Ascending aorta (tissue), 2 donors: ENCODE measurements at regions of chr10 and their contacts with region 1.

Region 1: DNA sequence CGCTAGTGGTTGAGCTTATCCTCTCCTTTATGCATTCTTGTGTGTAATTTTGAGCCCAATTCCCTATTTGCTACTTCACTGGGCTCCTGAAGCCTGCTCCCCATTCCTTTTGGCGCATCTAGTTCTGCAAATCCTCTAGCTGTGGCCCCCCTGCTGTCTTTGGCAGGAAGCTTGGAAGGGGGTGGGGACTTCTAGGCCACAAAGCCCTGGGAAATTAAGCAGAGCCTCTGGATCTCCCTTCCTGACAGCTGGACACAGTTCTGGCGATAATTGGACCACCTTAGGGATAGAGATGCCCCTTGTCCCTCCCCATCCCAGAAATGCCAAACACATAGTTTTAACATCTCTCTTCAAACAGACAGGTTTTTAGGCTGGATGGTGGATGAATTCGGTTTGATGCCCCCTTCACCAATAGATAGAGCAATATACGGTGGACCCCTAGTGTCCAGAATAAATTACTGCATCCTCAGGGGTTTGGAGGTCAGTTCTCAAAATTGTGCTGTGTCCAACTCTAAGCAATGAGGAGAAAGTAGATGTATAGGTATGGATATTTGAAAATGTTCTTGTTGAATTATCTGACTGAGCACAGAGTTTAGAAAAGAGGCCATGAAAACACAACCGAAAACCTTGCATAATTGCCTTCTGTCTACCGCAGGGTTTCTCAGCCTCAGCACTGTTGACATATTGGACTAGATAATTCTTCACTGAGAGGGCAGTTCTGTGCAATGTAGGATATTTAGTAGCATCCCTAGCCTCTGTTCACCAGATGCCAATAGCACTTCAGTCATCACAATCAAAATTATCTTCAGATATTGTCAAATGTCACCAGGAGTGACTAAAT is 75.5 kb downstream of the PAPSS2 start:
- DNase-seq: no peak
- H3K4me3 ChIP-seq: peak overlapping the region in 1 of 2 donors; percentile 23
- H3K27ac ChIP-seq: no peak overlapping the region
- H3K4me1 ChIP-seq: peaks cover 0 to 4% of the 10 kb centered on the region in 2 donors
- H3K27me3 ChIP-seq: no peaks in the 10 kb centered on the region
- CTCF ChIP-seq: peak; percentile 54 to 85 (median 82)

Region 2: DNA sequence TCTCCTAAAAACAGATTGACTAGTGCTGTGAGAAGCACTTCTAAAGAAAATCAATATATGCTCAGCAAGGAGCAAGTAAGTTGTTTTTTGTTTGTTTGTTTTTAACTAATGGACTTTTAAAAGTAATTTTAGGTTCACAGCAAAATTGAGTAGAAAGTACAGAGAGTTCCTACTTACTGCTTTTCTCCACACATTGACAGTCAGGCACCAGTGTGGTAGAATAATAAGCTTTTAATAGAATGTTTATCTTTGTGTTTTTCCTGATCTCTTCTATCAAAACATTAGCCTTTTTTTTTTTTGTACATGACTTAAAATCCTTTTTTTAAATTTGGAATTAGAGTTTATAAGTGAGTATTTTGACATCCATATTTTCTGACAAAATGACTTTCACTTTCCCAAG is 202.5 kb before region 1 on chr10:
- intact Hi-C with region 1: loop called (anchors 1 kb)
- DNase-seq: no peak
- H3K4me3 ChIP-seq: peak overlapping the region in 1 of 2 donors; percentile 7
- H3K27ac ChIP-seq: peak overlapping the region; percentile 59 to 61
- H3K4me1 ChIP-seq: peaks cover 0 to 6% of the 10 kb centered on the region in 2 donors
- H3K27me3 ChIP-seq: no peaks in the 10 kb centered on the region
- CTCF ChIP-seq: no peak

Region 3: DNA sequence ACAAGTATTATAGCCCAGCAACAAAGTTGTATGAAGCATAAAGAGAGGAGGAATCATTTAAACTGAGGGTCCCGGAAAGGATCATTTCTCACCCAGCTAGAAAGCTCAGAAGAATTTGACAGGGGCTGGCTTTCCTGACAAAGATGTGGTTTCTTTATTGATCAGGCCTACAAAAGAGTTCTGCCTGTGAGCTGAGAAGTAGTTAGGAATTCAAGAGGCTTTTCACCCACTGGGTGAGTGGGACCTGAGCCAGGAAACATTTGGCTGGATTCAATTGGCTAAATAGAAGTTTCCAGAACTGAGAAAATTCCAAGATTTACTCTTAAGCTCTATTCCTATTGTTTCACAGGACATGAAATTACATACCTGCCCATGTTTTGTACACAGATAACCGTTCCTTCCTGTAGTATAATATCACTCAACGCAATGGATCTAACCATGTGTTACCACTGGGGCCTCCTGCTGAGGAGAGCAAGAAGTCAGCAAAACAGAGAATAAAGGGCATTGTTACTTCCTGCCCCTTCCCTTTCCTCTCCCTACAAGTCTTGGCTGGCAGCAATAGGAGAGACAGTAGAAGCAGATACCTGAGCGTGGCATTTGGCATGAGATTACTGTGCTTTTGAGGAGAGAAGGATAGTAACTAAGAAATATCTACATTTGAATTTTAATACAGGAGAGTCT is 129.4 kb before region 1 on chr10:
- intact Hi-C with region 1: loop called (anchors 5 kb)
- DNase-seq: no peak
- H3K4me3 ChIP-seq: no peak overlapping the region
- H3K27ac ChIP-seq: peak overlapping the region in 1 of 2 donors; percentile 38
- H3K4me1 ChIP-seq: no peaks in the 10 kb centered on the region
- H3K27me3 ChIP-seq: no peaks in the 10 kb centered on the region
- CTCF ChIP-seq: no peak